Tibial artery (tissue), 4 donors: ENCODE measurements at regions of chr5 and their contacts with region 1.

Region 1: GRCh38 chr5:170791325-170791954 is 7.9 kb downstream of the GABRP start:
- DNase-seq: peak; percentile 58 to 74
- H3K4me3 ChIP-seq: no peak overlapping the region
- H3K27ac ChIP-seq: no peak overlapping the region
- H3K4me1 ChIP-seq: no peaks in the 10 kb centered on the region
- H3K27me3 ChIP-seq: no peaks in the 10 kb centered on the region
- CTCF ChIP-seq: peak; percentile 65 to 75

Region 2: GRCh38 chr5:170648541-170648940 is 142.9 kb before region 1 on chr5:
- intact Hi-C with region 1: loop called (anchors 10 kb)
- DNase-seq: no peak
- H3K4me3 ChIP-seq: no peak overlapping the region
- H3K27ac ChIP-seq: no peak overlapping the region
- H3K4me1 ChIP-seq: no peaks in the 10 kb centered on the region
- H3K27me3 ChIP-seq: peaks cover 0 to 7% of the 10 kb centered on the region in 2 donors
- CTCF ChIP-seq: no peak

Region 3: GRCh38 chr5:170745481-170746071 is 45.9 kb before region 1 on chr5:
- intact Hi-C with region 1: loop called (anchors 2 kb)
- DNase-seq: no peak
- H3K4me3 ChIP-seq: no peak overlapping the region
- H3K27ac ChIP-seq: no peak overlapping the region
- H3K4me1 ChIP-seq: peaks cover 0 to 25% (median 16%) of the 10 kb centered on the region in 4 donors
- H3K27me3 ChIP-seq: peaks cover 0 to 2% of the 10 kb centered on the region in 2 donors
- CTCF ChIP-seq: no peak

Region 4: GRCh38 chr5:170892196-170892595 is 100.8 kb after region 1 on chr5:
- intact Hi-C with region 1: no loop called
- DNase-seq: no peak
- H3K4me3 ChIP-seq: no peak overlapping the region
- H3K27ac ChIP-seq: no peak overlapping the region
- H3K4me1 ChIP-seq: no peaks in the 10 kb centered on the region
- H3K27me3 ChIP-seq: no peaks in the 10 kb centered on the region
- CTCF ChIP-seq: no peak

Region 5: DNA sequence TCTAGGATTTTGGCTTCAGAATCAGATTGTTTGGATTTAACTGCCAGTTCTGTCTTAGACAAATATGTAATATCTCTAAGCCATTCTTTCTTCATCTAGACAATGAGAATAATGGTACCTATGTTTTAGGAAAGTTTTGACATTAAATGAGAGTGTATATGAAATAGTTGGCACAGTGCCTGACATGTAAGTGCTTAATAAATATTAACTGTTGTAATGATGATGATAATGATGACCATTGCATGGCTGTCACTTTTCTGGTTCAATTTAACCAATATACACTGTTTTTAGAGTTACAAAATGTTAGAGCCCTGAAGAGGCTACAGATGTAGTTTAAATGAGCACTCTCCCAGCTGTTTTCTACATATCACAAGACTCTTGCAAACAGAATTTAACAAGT is 202.0 kb after region 1 on chr5:
- intact Hi-C with region 1: no loop called
- DNase-seq: no peak
- H3K4me3 ChIP-seq: no peak overlapping the region
- H3K27ac ChIP-seq: no peak overlapping the region
- H3K4me1 ChIP-seq: no peaks in the 10 kb centered on the region
- H3K27me3 ChIP-seq: no peaks in the 10 kb centered on the region
- CTCF ChIP-seq: no peak

Region 6: GRCh38 chr5:171946000-171946774 is 1154.7 kb after region 1 on chr5:
- intact Hi-C with region 1: no loop called
- DNase-seq: no peak
- H3K4me3 ChIP-seq: no peak overlapping the region
- H3K27ac ChIP-seq: no peak overlapping the region
- H3K4me1 ChIP-seq: peaks cover 0 to 46% (median 7%) of the 10 kb centered on the region in 4 donors
- H3K27me3 ChIP-seq: no peaks in the 10 kb centered on the region
- CTCF ChIP-seq: no peak